ENCODE measurements at regions of chr14 and their contacts with region 1.

Region 1: GRCh38 chr14:91114079-91115065 is 499 bp downstream of the DGLUCY start:
- DNase-seq: peak; percentile 64 to 82 (median 74)
- H3K4me3 ChIP-seq: peak overlapping the region; percentile 85 to 95
- H3K4me3 Mint-ChIP-seq: peak overlapping the region; percentile 88 to 99 (median 94)
- H3K27ac ChIP-seq: peak overlapping the region; percentile 94
- H3K27ac Mint-ChIP-seq: peak overlapping the region; percentile 94 to 99 (median 97)
- H3K4me1 ChIP-seq: peaks cover 72% of the 10 kb centered on the region
- H3K4me1 Mint-ChIP-seq: peaks cover 54 to 84% (median 69%) of the 10 kb centered on the region in 4 donors
- H3K27me3 ChIP-seq: no peaks in the 10 kb centered on the region
- H3K27me3 Mint-ChIP-seq: no peaks in the 10 kb centered on the region

Region 2: DNA sequence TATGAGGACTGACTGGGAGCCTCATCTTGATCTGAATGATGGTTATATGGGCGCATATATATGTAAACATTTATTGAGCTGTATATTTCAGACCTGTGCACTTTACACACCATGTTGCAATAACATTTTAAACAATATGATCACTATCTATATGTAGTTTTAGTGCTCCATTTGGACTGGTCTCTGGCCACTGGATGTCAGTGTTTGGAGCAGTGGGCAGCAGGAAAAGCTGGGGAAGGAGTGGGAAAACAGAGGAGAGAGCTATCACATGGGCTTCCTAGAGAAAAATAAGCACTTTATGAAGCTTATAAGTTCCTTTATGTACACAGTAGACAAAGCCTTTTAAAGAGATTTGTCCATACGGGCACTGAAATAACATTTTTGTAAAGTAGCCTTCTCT is 248.9 kb before region 1 on chr14:
- CTCF ChIA-PET with region 1: no interaction called
- POLR2A ChIA-PET with region 1: no interaction called
- intact Hi-C with region 1: no loop called
- DNase-seq: no peak
- H3K4me3 ChIP-seq: no peak overlapping the region
- H3K4me3 Mint-ChIP-seq: no peak overlapping the region
- H3K27ac ChIP-seq: no peak overlapping the region
- H3K27ac Mint-ChIP-seq: no peak overlapping the region
- H3K4me1 ChIP-seq: no peaks in the 10 kb centered on the region
- H3K4me1 Mint-ChIP-seq: no peaks in the 10 kb centered on the region
- H3K27me3 ChIP-seq: no peaks in the 10 kb centered on the region
- H3K27me3 Mint-ChIP-seq: no peaks in the 10 kb centered on the region

Region 3: GRCh38 chr14:91078095-91078737 is 36.2 kb before region 1 on chr14:
- CTCF ChIA-PET with region 1: interaction called, 11 read pairs
- POLR2A ChIA-PET with region 1: interaction called, 25 read pairs
- intact Hi-C with region 1: loop called (anchors 1 kb)
- DNase-seq: peak; percentile 68 to 87 (median 82)
- H3K4me3 ChIP-seq: no peak overlapping the region
- H3K4me3 Mint-ChIP-seq: peak overlapping the region; percentile 58 to 75 (median 64)
- H3K27ac ChIP-seq: no peak overlapping the region
- H3K27ac Mint-ChIP-seq: peak overlapping the region; percentile 79 to 91 (median 89)
- H3K4me1 ChIP-seq: peaks cover 33% of the 10 kb centered on the region
- H3K4me1 Mint-ChIP-seq: peaks cover 23 to 48% (median 32%) of the 10 kb centered on the region in 4 donors
- H3K27me3 ChIP-seq: no peaks in the 10 kb centered on the region
- H3K27me3 Mint-ChIP-seq: no peaks in the 10 kb centered on the region

Region 4: GRCh38 chr14:91089958-91090535 is 24.3 kb before region 1 on chr14:
- CTCF ChIA-PET with region 1: interaction called, 3 read pairs
- POLR2A ChIA-PET with region 1: interaction called, 37 read pairs
- intact Hi-C with region 1: no loop called
- DNase-seq: no peak
- H3K4me3 ChIP-seq: no peak overlapping the region
- H3K4me3 Mint-ChIP-seq: no peak overlapping the region
- H3K27ac ChIP-seq: no peak overlapping the region
- H3K27ac Mint-ChIP-seq: peak overlapping the region in 2 of 7 donors; percentile 29 to 42
- H3K4me1 ChIP-seq: no peaks in the 10 kb centered on the region
- H3K4me1 Mint-ChIP-seq: peaks cover 2 to 11% (median 6%) of the 10 kb centered on the region in 4 donors
- H3K27me3 ChIP-seq: no peaks in the 10 kb centered on the region
- H3K27me3 Mint-ChIP-seq: no peaks in the 10 kb centered on the region

Region 5: DNA sequence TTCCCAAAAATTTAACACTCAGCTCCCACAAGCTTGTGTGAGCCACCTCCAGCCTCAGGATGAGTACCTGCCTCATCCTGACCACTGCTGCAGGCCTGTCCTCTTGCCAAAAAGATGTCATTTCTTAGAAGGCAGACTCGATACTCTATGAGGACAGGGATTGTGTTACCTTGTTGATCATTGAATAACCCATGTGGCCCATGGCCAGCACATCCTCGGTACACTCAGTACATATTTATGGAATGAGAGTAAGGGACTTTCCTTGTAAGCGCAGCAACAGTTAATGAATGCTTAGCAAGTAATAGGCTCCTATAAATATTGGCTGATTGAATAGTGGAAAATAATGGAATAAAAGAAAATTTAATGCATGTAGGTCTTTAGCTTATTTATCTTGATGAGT is 15.8 kb before region 1 on chr14:
- CTCF ChIA-PET with region 1: interaction called, 19 read pairs
- POLR2A ChIA-PET with region 1: interaction called, 37 read pairs
- intact Hi-C with region 1: no loop called
- DNase-seq: no peak
- H3K4me3 ChIP-seq: no peak overlapping the region
- H3K4me3 Mint-ChIP-seq: no peak overlapping the region
- H3K27ac ChIP-seq: no peak overlapping the region
- H3K27ac Mint-ChIP-seq: peak overlapping the region in 1 of 7 donors; percentile 74
- H3K4me1 ChIP-seq: no peaks in the 10 kb centered on the region
- H3K4me1 Mint-ChIP-seq: peaks cover 0 to 5% (median 4%) of the 10 kb centered on the region in 4 donors
- H3K27me3 ChIP-seq: peaks cover 3% of the 10 kb centered on the region
- H3K27me3 Mint-ChIP-seq: peaks cover 0 to 4% of the 10 kb centered on the region in 2 donors

Region 6: GRCh38 chr14:91138511-91139359 is 24.4 kb after region 1 on chr14:
- CTCF ChIA-PET with region 1: interaction called, 18 read pairs
- POLR2A ChIA-PET with region 1: interaction called, 15 read pairs
- intact Hi-C with region 1: no loop called
- DNase-seq: peak; percentile 40 to 53 (median 48)
- H3K4me3 ChIP-seq: no peak overlapping the region
- H3K4me3 Mint-ChIP-seq: no peak overlapping the region
- H3K27ac ChIP-seq: no peak overlapping the region
- H3K27ac Mint-ChIP-seq: peak overlapping the region in 4 of 7 donors; percentile 13 to 64 (median 60)
- H3K4me1 ChIP-seq: peaks cover 20% of the 10 kb centered on the region
- H3K4me1 Mint-ChIP-seq: peaks cover 23 to 45% (median 37%) of the 10 kb centered on the region in 4 donors
- H3K27me3 ChIP-seq: no peaks in the 10 kb centered on the region
- H3K27me3 Mint-ChIP-seq: no peaks in the 10 kb centered on the region

Region 7: GRCh38 chr14:91388551-91388975 is 274.2 kb after region 1 on chr14:
- CTCF ChIA-PET with region 1: no interaction called
- POLR2A ChIA-PET with region 1: no interaction called
- intact Hi-C with region 1: no loop called
- DNase-seq: peak in 4 of 5 donors; percentile 40 to 75 (median 48)
- H3K4me3 ChIP-seq: peak overlapping the region in 1 of 2 donors; percentile 24
- H3K4me3 Mint-ChIP-seq: peak overlapping the region; percentile 53 to 79 (median 73)
- H3K27ac ChIP-seq: peak overlapping the region; percentile 56
- H3K27ac Mint-ChIP-seq: peak overlapping the region; percentile 83 to 96 (median 92)
- H3K4me1 ChIP-seq: peaks cover 100% of the 10 kb centered on the region
- H3K4me1 Mint-ChIP-seq: peaks cover 68 to 97% (median 86%) of the 10 kb centered on the region in 4 donors
- H3K27me3 ChIP-seq: no peaks in the 10 kb centered on the region
- H3K27me3 Mint-ChIP-seq: no peaks in the 10 kb centered on the region

Measured in CD4-positive, alpha-beta memory T cell (primary cell).